ENCODE measurements at regions of chr7 and their contacts with region 1.

Region 1: DNA sequence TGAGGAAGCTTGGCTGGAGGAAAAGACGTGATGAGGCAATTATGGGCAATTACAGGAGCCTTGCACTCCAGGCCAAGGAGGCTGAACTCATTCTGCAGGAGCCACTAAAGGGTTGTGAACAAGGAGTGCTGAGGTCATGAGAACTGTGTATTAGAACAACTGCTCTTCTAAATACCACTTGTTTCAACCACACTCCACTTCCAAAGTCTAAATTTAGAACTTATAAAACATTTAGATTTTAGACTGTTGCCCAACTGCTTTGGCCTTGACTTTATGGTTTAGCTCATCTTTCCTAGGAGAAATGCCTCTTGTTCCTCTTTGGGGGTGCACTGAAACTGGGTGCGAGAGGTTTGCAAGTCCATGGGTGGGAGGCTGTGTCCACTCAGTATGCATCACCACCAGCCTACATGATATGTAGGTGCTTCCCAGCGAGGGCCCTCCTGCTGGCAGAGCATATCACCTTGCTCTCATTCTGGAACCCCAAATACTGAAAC is 199.7 kb upstream of the AOAH start:
- DNase-seq: no peak
- ATAC-seq: no peak
- H3K4me3 ChIP-seq: no peak overlapping the region
- H3K27ac ChIP-seq: no peak overlapping the region
- H3K4me1 ChIP-seq: no peaks in the 10 kb centered on the region
- H3K27me3 ChIP-seq: no peaks in the 10 kb centered on the region
- CTCF ChIP-seq: no peak
- POLR2A ChIP-seq: no peak
- RAD21 ChIP-seq: no peak

Region 2: DNA sequence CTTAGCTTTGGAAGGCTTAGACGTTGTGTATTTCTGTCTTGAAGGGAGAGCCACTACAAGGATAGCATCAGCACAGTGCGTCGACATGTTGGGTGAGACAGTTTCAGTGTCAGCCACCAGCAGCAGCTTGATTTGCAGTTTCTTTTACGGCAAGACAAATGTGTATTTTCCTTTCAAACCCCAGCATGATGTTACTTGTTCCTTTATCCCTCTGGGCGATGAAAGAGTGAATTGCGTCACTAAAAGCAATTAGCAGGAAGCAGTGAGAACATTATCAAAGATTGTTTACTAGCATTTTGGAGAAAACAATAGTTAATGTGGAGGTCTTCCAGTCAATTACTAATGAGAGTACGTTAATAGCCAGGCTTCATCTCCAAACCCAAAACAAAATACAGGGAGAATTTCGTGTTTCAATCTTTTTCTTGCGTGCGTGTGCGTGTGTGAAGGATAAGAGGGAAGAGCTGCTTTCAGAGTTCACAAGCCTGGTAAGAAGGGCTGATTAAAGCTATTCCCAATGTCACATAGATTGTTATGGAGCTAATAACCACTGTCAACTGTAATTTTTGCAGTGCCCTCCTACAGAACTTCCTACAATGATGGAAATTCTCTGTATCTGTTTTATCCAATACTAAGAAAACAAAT is 42.6 kb before region 1 on chr7:
- CTCF ChIA-PET with region 1: no interaction called
- POLR2A ChIA-PET with region 1: interaction called, 19 read pairs
- dilution Hi-C with region 1: no loop called
- in situ Hi-C with region 1: no loop called
- intact Hi-C with region 1: no loop called
- DNase-seq: no peak
- ATAC-seq: no peak
- H3K4me3 ChIP-seq: no peak overlapping the region
- H3K27ac ChIP-seq: no peak overlapping the region
- H3K4me1 ChIP-seq: no peaks in the 10 kb centered on the region
- H3K27me3 ChIP-seq: no peaks in the 10 kb centered on the region
- CTCF ChIP-seq: no peak
- POLR2A ChIP-seq: no peak
- RAD21 ChIP-seq: no peak

Region 3: DNA sequence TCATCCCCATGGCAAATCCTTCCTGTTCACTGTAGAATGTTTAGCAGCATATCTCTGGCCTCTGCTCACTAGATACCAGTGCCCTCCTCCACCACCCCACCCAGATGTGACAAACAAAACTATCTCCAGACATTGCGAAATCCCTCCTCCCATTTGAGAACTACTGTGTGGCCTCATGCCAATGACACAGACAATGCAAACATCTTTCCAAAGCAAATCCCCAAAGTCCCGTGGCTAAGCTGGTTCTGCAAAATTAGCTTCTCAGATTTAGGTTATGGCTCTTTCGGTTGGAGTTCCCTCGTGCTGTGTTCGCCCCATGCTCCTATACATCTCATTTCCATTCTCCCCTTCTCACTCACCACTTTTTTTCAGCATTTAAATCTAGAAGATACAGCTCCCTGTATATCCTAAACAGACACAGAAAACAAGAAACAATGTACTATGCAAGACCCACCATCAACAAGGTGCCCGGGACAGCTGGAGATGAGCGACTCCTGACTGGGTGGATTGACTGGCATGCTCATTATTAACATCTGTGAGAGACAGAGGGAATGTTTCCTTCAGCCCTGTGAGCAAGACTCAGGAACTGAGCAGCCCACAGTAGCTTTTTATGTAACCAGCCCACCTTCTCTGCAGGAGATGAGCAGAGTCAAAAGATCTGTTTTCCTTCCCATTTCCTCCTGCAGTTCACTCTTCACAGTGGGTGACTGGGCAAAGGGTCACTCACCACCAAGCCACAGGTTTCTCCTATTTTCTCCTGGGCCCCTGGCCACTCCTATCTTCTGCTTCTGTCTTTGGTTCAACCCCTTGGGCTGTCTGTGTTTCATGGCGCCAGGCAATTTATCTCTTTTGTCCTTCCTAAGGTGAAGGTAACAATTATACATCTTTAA is 26.0 kb after region 1 on chr7:
- CTCF ChIA-PET with region 1: no interaction called
- POLR2A ChIA-PET with region 1: no interaction called
- dilution Hi-C with region 1: no loop called
- in situ Hi-C with region 1: no loop called
- intact Hi-C with region 1: no loop called
- DNase-seq: no peak
- ATAC-seq: no peak
- H3K4me3 ChIP-seq: no peak overlapping the region
- H3K27ac ChIP-seq: no peak overlapping the region
- H3K4me1 ChIP-seq: no peaks in the 10 kb centered on the region
- H3K27me3 ChIP-seq: no peaks in the 10 kb centered on the region
- CTCF ChIP-seq: no peak
- POLR2A ChIP-seq: no peak
- RAD21 ChIP-seq: no peak

Region 4: DNA sequence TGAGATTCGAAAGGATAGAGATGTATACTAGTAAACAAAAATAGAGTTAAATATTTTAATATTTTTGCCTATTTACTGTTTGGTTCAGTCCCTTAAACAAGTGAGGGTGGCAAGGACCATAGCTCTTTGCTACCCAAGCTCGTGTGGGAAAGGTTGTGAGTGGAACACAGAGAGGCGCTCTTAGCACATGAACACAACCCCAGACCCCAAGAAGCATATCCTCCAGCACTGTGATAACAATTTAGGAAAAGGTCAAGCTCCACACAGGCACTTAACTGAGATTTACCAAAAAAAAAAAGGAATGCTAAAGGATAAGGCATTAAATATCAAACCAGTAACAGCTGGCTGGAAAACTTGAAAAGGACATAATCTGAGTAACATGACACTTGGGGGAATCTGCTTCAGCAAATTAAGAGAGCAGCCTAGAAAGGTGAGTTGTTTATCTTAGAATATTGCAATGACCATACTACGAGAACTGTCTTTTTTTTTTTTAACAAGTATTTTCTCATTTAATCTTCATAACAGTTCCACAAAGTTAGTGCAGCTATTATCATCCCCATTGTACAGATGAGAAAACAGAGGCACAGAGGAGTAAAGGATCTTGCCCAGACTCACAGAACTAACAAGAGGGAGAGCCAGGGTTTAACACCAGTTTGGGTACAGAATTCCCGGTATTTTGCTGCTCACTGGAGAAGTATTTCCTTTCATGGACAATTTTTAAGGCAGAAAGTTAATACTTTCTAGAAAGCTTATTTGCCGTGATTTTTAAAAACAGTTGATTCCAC is 103.8 kb after region 1 on chr7:
- CTCF ChIA-PET with region 1: no interaction called
- POLR2A ChIA-PET with region 1: no interaction called
- dilution Hi-C with region 1: no loop called
- in situ Hi-C with region 1: no loop called
- intact Hi-C with region 1: no loop called
- DNase-seq: no peak
- ATAC-seq: no peak
- H3K4me3 ChIP-seq: no peak overlapping the region
- H3K27ac ChIP-seq: no peak overlapping the region
- H3K4me1 ChIP-seq: peaks cover 11% of the 10 kb centered on the region
- H3K27me3 ChIP-seq: no peaks in the 10 kb centered on the region; the same call in 1 of the 2 replicates
- CTCF ChIP-seq: 0 out of 2 replicates have a peak, but pooled peaks have one; percentile 15
- POLR2A ChIP-seq: no peak
- RAD21 ChIP-seq: no peak

Measured in IMR-90 (cell line).